ENCODE measurements at regions of chr18 and their contacts with region 1.

Region 1: DNA sequence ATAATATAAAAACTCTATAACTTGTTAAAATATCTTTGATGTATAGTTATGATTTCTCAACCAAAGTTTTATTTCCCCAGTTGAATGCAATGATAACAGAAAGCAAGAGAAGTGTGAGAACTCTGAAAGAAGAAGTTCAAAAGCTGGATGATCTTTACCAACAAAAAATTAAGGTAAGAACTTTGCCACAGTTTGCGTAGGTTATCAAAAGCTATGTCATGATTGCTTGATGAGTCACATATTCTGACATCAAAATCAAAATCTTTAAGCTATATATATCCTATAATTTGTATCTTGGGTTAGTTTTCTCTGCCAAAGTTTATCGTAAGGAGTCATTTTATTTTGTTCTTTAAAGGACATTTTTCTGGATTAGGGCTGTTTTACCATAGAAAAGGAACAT is 35.0 kb downstream of the NDC80 start:
- DNase-seq: no peak
- H3K4me3 Mint-ChIP-seq: peak overlapping the region; percentile 75
- H3K27ac Mint-ChIP-seq: peak overlapping the region; percentile 87
- H3K4me1 Mint-ChIP-seq: peaks cover 69% of the 10 kb centered on the region
- H3K27me3 Mint-ChIP-seq: no peaks in the 10 kb centered on the region

Region 2: GRCh38 chr18:2337552-2338141 is 268.7 kb before region 1 on chr18:
- intact Hi-C with region 1: no loop called
- DNase-seq: peak; percentile 1
- H3K4me3 Mint-ChIP-seq: no peak overlapping the region
- H3K27ac Mint-ChIP-seq: no peak overlapping the region
- H3K4me1 Mint-ChIP-seq: peaks cover 5% of the 10 kb centered on the region
- H3K27me3 Mint-ChIP-seq: peaks cover 4% of the 10 kb centered on the region

Region 3: DNA sequence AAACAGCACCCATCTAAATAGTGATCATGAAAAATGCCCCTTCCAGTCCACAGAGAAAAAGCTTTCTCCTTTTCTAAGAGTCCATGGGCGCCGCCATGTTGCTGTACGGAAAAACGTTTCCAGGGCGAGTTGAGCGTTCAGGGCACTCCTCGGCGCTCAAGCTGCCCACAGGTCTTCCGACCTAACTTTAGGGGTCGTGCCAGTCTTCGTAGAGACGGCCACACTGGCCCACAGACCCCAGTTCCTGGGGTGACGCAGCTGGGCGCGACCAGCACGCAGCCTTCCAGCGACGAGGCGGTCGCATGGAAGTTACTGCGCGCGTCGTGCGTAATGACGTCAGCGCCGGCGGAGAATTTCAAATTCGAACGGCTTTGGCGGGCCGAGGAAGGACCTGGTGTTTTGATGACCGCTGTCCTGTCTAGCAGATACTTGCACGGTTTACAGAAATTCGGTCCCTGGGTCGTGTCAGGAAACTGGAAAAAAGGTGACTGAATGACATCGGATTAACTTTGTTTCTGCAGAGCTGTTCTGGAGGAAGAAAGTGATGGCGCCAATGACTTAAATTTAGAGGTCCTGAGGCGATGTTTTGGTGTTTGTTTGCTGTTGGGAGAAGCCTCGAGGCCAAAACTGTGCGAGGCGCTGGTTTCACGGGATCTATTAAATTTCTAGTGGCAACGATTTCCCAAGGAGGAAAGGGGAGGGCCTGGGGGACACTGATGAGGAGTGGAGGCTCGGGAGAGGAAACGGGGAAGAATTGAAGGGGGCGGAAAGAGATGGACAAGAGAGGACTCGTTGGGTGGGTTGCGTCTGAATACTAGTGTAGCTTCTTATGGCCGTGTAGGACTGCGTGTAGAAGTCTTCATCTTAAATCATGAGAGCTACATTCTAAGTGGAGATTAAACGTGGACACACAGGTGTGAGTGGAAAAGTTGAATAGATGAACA is 34.9 kb before region 1 on chr18 and contains the starts of genes METTL4 and NDC80:
- intact Hi-C with region 1: loop called (anchors 1 kb)
- DNase-seq: peak; percentile 79
- H3K4me3 Mint-ChIP-seq: peak within 1 kb of the TSS; percentile 97
- H3K27ac Mint-ChIP-seq: peak within 1 kb of the TSS; percentile 97
- H3K4me1 Mint-ChIP-seq: peaks cover 66% of the 10 kb centered on the region
- H3K27me3 Mint-ChIP-seq: no peaks in the 10 kb centered on the region
- total RNA-seq, gene METTL4: 15.0 and 26.2 TPM in 2 replicates
- total RNA-seq, gene NDC80: 41.2 and 42.6 TPM in 2 replicates

Region 4: DNA sequence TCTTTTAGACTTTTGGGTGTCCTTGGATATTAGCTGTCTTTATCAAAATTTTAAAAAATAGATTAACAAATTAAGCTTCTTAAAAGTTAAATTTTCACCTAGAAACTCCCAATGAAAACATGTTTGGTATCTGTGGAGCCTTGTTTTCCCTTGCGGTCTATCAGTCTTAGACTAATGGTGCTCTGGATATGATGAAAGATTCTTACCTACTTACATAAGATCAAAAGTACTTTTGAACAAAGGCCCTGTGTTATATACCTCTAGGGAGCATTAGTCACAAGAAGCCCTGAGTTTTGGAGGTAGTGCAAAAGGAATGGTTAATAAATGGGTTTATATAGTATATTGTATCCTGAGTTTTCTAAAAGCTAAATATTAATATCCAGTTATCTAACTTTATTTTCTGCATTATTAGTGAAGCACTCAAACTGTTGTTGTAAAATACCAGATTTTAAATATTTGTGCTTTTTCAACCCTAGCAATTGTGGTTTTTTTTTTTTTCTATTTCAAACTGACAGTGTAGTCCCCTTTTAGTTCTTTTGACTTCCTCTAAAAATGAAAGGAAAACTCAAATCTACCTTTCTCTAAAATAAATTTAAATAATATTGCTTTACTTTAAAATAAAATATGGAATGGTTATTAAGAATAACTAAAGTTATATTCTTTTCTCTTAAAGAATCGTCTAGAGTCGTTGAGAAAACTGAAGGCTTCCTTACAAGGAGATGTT is 16.8 kb before region 1 on chr18:
- intact Hi-C with region 1: loop called (anchors 1 kb)
- DNase-seq: no peak
- H3K4me3 Mint-ChIP-seq: peak overlapping the region; percentile 63
- H3K27ac Mint-ChIP-seq: peak overlapping the region; percentile 77
- H3K4me1 Mint-ChIP-seq: peaks cover 58% of the 10 kb centered on the region
- H3K27me3 Mint-ChIP-seq: no peaks in the 10 kb centered on the region

Region 5: DNA sequence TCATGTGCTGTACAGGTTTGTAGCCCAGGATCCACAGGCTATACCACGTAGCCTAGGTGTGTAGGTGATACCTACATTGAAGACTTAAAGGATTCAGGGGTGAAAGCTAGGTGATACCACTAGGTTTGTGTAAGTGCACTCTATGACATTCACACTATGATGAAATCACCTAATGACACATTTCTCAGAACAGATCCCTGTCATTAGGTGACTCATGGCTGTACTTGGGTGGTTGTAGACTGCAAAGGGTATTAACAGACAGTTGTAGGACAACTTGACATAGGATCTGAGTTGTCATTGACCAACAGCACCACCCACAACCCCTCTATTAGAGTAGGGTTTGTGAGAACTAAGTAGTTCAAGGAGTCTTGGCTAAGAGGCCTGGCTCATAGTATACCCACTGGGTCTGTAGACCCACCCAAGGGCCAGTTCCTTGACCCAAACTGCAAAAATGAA is 21.5 kb after region 1 on chr18:
- intact Hi-C with region 1: loop called (anchors 2 kb)
- DNase-seq: no peak
- H3K4me3 Mint-ChIP-seq: no peak overlapping the region
- H3K27ac Mint-ChIP-seq: peak overlapping the region; percentile 29
- H3K4me1 Mint-ChIP-seq: peaks cover 18% of the 10 kb centered on the region
- H3K27me3 Mint-ChIP-seq: no peaks in the 10 kb centered on the region

Region 6: GRCh38 chr18:2636126-2636631 is 29.8 kb after region 1 on chr18:
- intact Hi-C with region 1: loop called (anchors 1 kb)
- DNase-seq: no peak
- H3K4me3 Mint-ChIP-seq: peak overlapping the region; percentile 85
- H3K27ac Mint-ChIP-seq: peak overlapping the region; percentile 99
- H3K4me1 Mint-ChIP-seq: peaks cover 71% of the 10 kb centered on the region
- H3K27me3 Mint-ChIP-seq: no peaks in the 10 kb centered on the region

Region 7: DNA sequence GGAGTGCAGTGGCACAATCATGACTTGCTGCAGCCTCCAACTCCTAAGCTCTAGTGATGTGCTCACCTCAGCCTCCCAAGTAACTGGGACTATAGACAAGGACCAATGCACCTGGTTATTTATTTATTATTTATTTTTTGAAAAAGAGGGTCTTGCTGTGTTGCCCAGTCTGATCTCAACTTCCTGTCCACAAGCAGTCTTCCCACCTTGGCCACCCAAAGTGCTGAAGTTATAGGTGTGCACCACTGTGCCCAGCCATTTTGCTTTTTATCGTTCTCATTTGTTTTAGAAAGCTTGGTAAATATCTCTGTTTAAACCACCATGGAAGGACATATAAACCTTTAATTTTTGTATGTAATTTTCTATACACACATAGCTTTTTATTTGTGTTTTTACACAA is 123.4 kb after region 1 on chr18:
- intact Hi-C with region 1: no loop called
- DNase-seq: no peak
- H3K4me3 Mint-ChIP-seq: no peak overlapping the region
- H3K27ac Mint-ChIP-seq: no peak overlapping the region
- H3K4me1 Mint-ChIP-seq: peaks cover 21% of the 10 kb centered on the region
- H3K27me3 Mint-ChIP-seq: no peaks in the 10 kb centered on the region

Measured in activated T-helper 1 cell treated with anti-CD3 and anti-CD28 coated beads, Interleukin-12 subunit alpha, Interleukin-12 subunit beta, Interleukin-2, Interleukin-4 antibody, amounts not matched to agents 30 ng/mL and 10 ng/mL and 1 ng/mL, durations not matched to agents 14 hours and 24 hours and 36 hours (primary cell).